Common myeloid progenitor, CD34-positive (primary cell): ENCODE measurements at regions of chr5 and their contacts with region 1.

Region 1: GRCh38 chr5:35651002-35651756 is 33.5 kb downstream of the SPEF2 start:
- DNase-seq: peak; percentile 46 to 68 (median 64)
- H3K4me3 ChIP-seq: no peak overlapping the region
- H3K27ac ChIP-seq: no peak overlapping the region
- H3K4me1 ChIP-seq: no peaks in the 10 kb centered on the region
- H3K27me3 ChIP-seq: no peaks in the 10 kb centered on the region

Region 2: GRCh38 chr5:35626108-35626507 is 25.1 kb before region 1 on chr5:
- CTCF ChIA-PET with region 1: interaction called, 15 read pairs
- POLR2A ChIA-PET with region 1: no interaction called
- DNase-seq: no peak
- H3K4me3 ChIP-seq: no peak overlapping the region
- H3K27ac ChIP-seq: no peak overlapping the region
- H3K4me1 ChIP-seq: peaks cover 0 to 15% (median 1%) of the 10 kb centered on the region in 4 experiments
- H3K27me3 ChIP-seq: no peaks in the 10 kb centered on the region

Region 3: GRCh38 chr5:35640623-35641022 is 10.6 kb before region 1 on chr5:
- CTCF ChIA-PET with region 1: interaction called, 12 read pairs
- POLR2A ChIA-PET with region 1: no interaction called
- DNase-seq: no peak
- H3K4me3 ChIP-seq: no peak overlapping the region
- H3K27ac ChIP-seq: no peak overlapping the region
- H3K4me1 ChIP-seq: no peaks in the 10 kb centered on the region
- H3K27me3 ChIP-seq: no peaks in the 10 kb centered on the region

Region 4: DNA sequence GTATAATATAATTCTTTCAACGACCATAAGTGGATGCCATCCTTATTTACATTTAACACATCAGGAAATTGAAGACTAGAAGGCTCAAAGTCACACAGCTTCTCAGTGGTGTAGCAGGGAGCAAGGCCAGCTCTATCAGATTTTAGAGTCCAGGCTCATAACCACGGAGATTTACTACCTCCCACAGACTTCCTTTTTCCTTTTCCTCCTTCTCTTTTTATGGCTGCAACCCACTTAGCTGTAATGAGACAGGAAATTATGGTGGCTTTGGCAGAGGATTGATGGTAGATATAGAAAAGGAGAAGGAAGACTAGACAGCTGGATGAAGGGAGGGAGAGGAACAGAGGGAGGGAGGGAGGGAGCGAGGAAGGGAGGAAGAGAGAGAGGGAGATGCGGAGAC is 13.9 kb after region 1 on chr5:
- CTCF ChIA-PET with region 1: interaction called, 27 read pairs
- POLR2A ChIA-PET with region 1: no interaction called
- DNase-seq: peak; percentile 54 to 78 (median 68)
- H3K4me3 ChIP-seq: peak overlapping the region in 1 of 7 experiments; percentile 37
- H3K27ac ChIP-seq: no peak overlapping the region
- H3K4me1 ChIP-seq: peaks cover 10 to 42% (median 18%) of the 10 kb centered on the region in 4 experiments
- H3K27me3 ChIP-seq: no peaks in the 10 kb centered on the region

Region 5: GRCh38 chr5:35762368-35762767 is 111.2 kb after region 1 on chr5:
- CTCF ChIA-PET with region 1: no interaction called
- POLR2A ChIA-PET with region 1: no interaction called
- DNase-seq: no peak
- H3K4me3 ChIP-seq: no peak overlapping the region
- H3K27ac ChIP-seq: no peak overlapping the region
- H3K4me1 ChIP-seq: no peaks in the 10 kb centered on the region
- H3K27me3 ChIP-seq: no peaks in the 10 kb centered on the region

Region 6: GRCh38 chr5:35777358-35778087 is 126.3 kb after region 1 on chr5:
- CTCF ChIA-PET with region 1: interaction called, 20 read pairs
- POLR2A ChIA-PET with region 1: no interaction called
- DNase-seq: peak; percentile 69 to 83 (median 77)
- H3K4me3 ChIP-seq: no peak overlapping the region
- H3K27ac ChIP-seq: no peak overlapping the region
- H3K4me1 ChIP-seq: peaks cover 0 to 14% (median 7%) of the 10 kb centered on the region in 4 experiments
- H3K27me3 ChIP-seq: no peaks in the 10 kb centered on the region

Region 7: GRCh38 chr5:35926389-35927051 is 275.3 kb after region 1 on chr5:
- CTCF ChIA-PET with region 1: interaction called, 74 read pairs
- POLR2A ChIA-PET with region 1: no interaction called
- DNase-seq: peak; percentile 63 to 85 (median 76)
- H3K4me3 ChIP-seq: no peak overlapping the region
- H3K27ac ChIP-seq: no peak overlapping the region
- H3K4me1 ChIP-seq: peaks cover 2 to 20% (median 18%) of the 10 kb centered on the region in 4 experiments
- H3K27me3 ChIP-seq: peaks cover 0 to 6% (median 0%) of the 10 kb centered on the region in 5 experiments